Endothelial cell of umbilical vein (primary cell): ENCODE measurements at regions of chr20 and their contacts with region 1.

Region 1: GRCh38 chr20:35329435-35330139 is 37.4 kb upstream of the FAM83C start:
- DNase-seq: no peak
- H3K4me3 ChIP-seq: no peak overlapping the region
- H3K27ac ChIP-seq: no peak overlapping the region
- H3K4me1 ChIP-seq: peaks cover 38% of the 10 kb centered on the region
- H3K27me3 ChIP-seq: no peaks in the 10 kb centered on the region
- CTCF ChIP-seq: peak; percentile 58 to 69
- POLR2A ChIP-seq: no peak

Region 2: DNA sequence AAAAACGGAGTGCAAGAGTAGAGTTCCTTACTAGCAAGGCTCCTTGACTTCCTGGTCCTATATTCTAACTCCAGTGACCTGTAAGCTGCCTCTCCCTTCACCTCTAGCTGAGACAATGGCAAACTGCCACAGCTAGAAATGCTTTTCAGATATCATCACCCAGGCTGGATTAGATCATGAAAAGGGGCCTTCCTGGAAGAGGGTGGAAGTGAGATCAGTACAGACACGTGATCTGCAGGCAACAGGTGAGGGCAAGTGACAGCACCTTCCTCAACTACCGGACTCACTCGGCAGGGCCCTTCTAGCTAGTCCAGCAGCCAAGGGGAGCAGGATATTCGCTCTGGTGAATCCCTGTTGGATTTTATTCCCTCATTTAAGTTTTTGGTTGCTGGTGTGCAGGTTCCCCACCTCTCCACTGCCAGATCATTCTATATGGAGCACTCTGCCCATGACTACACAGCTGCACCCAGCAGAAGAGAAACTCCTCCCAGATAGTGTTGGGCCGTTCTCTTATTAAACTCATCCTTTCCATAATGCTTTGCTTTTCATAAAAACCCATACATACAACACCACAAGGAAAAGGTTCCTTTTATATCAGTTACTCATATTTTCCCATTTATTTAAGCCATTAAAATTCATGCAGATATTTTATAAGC is 11.0 kb before region 1 on chr20:
- CTCF ChIA-PET with region 1: interaction called, 10 read pairs
- POLR2A ChIA-PET with region 1: no interaction called
- dilution Hi-C with region 1: no loop called
- intact Hi-C with region 1: no loop called
- DNase-seq: peak; percentile 74
- H3K4me3 ChIP-seq: no peak overlapping the region
- H3K27ac ChIP-seq: peak overlapping the region; percentile 74
- H3K4me1 ChIP-seq: peaks cover 43% of the 10 kb centered on the region
- H3K27me3 ChIP-seq: no peaks in the 10 kb centered on the region
- CTCF ChIP-seq: no peak
- POLR2A ChIP-seq: no peak

Region 3: DNA sequence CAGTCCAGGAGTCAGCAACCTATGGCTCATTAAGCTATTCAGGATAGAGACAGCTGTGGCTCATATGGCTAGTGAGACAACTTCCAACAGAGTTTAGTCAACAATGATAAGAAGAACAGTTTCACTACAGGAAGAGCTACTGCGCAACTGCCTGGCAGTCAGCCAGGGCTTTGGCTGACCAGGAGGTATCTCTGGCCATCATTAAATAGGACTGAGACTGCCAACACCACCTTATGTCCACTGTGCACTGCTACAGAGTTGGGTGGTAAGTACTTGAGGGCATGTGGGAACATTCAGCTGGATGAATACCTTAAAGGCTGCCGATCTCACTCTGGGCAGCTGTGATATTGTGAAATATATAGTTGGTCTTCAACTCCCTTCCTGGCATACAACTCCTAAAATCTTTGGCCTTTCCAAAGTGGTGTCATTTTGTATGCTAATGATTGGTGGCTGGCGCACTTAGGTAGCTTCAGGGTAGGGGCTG is 14.8 kb after region 1 on chr20:
- CTCF ChIA-PET with region 1: interaction called, 33 read pairs
- POLR2A ChIA-PET with region 1: no interaction called
- dilution Hi-C with region 1: no loop called
- intact Hi-C with region 1: no loop called
- DNase-seq: peak; percentile 88
- H3K4me3 ChIP-seq: no peak overlapping the region
- H3K27ac ChIP-seq: no peak overlapping the region
- H3K4me1 ChIP-seq: peaks cover 10% of the 10 kb centered on the region
- H3K27me3 ChIP-seq: no peaks in the 10 kb centered on the region
- CTCF ChIP-seq: no peak
- POLR2A ChIP-seq: no peak